Mammary epithelial cell (primary cell): ENCODE measurements at regions of chr9 and their contacts with region 1.

Region 1: GRCh38 chr9:133149126-133150107 is 14.3 kb downstream of the GBGT1 start:
- DNase-seq: peak; percentile 92
- H3K4me3 ChIP-seq: peak overlapping the region; percentile 12 to 98 (median 86)
- H3K27ac ChIP-seq: peak overlapping the region; percentile 88
- H3K4me1 ChIP-seq: peaks cover 16% of the 10 kb centered on the region
- H3K27me3 ChIP-seq: no peaks in the 10 kb centered on the region
- CTCF ChIP-seq: peak in 1 of 2 donors; percentile 50

Region 2: GRCh38 chr9:133023117-133023890 is 126.1 kb before region 1 on chr9:
- CTCF ChIA-PET with region 1: no interaction called
- dilution Hi-C with region 1: no loop called
- in situ Hi-C with region 1: no loop called
- intact Hi-C with region 1: loop called (anchors 2 kb)
- DNase-seq: no peak
- H3K4me3 ChIP-seq: no peak overlapping the region
- H3K27ac ChIP-seq: no peak overlapping the region
- H3K4me1 ChIP-seq: no peaks in the 10 kb centered on the region
- H3K27me3 ChIP-seq: no peaks in the 10 kb centered on the region
- CTCF ChIP-seq: no peak

Region 3: DNA sequence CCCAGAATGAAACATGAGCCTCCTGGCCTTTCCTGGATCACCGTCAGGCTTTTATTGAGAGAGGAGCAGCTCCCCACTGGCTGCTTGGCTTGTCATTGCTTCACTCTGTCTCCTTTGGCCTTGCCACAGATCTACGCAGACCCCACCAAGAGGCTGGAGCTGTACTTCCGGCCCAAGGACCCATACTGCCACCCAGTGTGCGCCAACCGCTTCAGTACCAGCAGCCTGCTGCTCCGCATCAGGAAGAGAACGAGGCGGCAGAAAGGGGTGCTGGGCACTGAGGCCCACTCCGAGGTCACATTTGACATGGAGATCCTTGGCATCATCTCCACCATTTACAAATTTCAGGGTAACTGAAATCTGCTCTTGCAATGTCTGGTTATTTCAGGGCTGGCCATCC is 107.5 kb before region 1 on chr9:
- CTCF ChIA-PET with region 1: interaction called, 14 read pairs
- dilution Hi-C with region 1: no loop called
- in situ Hi-C with region 1: loop called (anchors 10 kb)
- intact Hi-C with region 1: loop called (anchors 1 kb)
- DNase-seq: no peak
- H3K4me3 ChIP-seq: no peak overlapping the region
- H3K27ac ChIP-seq: no peak overlapping the region
- H3K4me1 ChIP-seq: no peaks in the 10 kb centered on the region
- H3K27me3 ChIP-seq: no peaks in the 10 kb centered on the region
- CTCF ChIP-seq: no peak

Region 4: DNA sequence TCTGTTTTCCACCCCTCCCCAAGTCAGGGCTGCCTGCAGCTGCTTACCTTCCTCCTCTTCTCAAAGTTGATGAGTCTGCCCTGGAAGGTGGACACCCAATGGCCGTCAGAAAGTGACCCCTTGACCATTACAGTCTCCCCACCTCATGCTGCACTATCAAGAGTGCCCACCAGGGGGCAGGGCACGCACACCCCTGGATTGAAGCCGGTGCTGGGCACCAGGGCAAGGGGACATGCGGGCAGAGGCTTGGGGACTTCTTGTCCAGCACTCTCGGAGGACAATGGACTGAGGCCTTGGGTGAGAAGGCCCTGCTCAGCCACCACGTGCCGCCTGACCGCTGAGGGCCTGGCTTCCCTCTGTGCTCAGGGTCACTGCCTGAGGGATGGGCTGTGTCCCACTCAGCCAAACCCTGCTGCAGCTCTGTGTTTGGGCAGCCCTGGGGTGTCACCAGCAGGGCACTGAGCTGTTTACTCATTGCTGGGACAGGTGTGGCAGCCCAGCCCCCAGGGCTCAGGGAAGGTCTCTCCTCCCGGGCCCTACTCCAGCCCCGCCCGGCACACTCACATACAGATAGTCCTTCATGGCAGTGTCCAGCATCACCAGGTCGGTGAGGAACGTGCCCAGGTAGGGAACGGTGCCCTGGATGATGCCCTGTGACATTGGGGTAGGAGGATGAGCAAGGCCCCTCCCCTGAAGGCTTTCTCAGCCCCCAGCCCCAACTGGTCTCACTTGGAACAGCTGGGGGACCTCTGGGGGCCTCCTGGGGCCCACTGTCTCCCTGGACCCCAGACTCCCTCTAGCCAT is 46.0 kb before region 1 on chr9:
- CTCF ChIA-PET with region 1: no interaction called
- dilution Hi-C with region 1: loop called (anchors 5 kb)
- in situ Hi-C with region 1: loop called in 1 of 2 experiments (anchors 5 kb)
- intact Hi-C with region 1: loop called (anchors 1 kb)
- DNase-seq: no peak
- H3K4me3 ChIP-seq: no peak overlapping the region
- H3K27ac ChIP-seq: no peak overlapping the region
- H3K4me1 ChIP-seq: no peaks in the 10 kb centered on the region
- H3K27me3 ChIP-seq: no peaks in the 10 kb centered on the region
- CTCF ChIP-seq: peak; percentile 93 to 94

Region 5: DNA sequence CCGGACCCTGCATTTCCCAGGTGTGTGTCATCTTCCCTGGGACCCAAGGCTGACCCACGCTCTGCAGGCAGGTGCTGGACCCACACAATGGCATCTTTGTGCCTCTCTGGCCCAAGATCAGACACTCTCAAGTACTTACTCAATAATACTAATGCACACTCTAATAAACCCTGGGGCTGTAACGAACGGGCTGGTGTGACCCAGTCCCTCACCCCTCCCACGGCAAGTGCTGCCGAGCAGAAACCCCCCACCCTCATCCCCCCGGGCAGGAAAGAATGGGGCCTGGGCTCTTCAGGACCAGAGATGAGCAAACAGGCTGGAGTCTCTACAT is 60.8 kb after region 1 on chr9:
- CTCF ChIA-PET with region 1: no interaction called
- dilution Hi-C with region 1: no loop called
- in situ Hi-C with region 1: no loop called
- intact Hi-C with region 1: no loop called
- DNase-seq: peak; percentile 87
- H3K4me3 ChIP-seq: no peak overlapping the region
- H3K27ac ChIP-seq: no peak overlapping the region
- H3K4me1 ChIP-seq: peaks cover 29% of the 10 kb centered on the region
- H3K27me3 ChIP-seq: no peaks in the 10 kb centered on the region
- CTCF ChIP-seq: no peak

Region 6: GRCh38 chr9:133356391-133357091 is 207.1 kb after region 1 on chr9 and contains the starts of genes SURF1 and SURF2:
- CTCF ChIA-PET with region 1: no interaction called
- dilution Hi-C with region 1: no loop called
- in situ Hi-C with region 1: no loop called
- intact Hi-C with region 1: no loop called
- DNase-seq: peak; percentile 76
- H3K4me3 ChIP-seq: peak within 1 kb of the TSS; percentile 66 to 97 (median 70)
- H3K27ac ChIP-seq: peak within 1 kb of the TSS; percentile 40
- H3K4me1 ChIP-seq: peaks cover 16% of the 10 kb centered on the region
- H3K27me3 ChIP-seq: no peaks in the 10 kb centered on the region
- CTCF ChIP-seq: peak; percentile 7 to 40
- total RNA-seq, gene SURF1: 17.5 to 23.4 TPM
- total RNA-seq, gene SURF2: 22.5 to 42.2 TPM